Activated CD4-positive, alpha-beta T cell treated with anti-CD3 and anti-CD28 coated beads, Interleukin-2, amount 10 ng/mL, durations not matched to agents 7 days and 5 days (primary cell): ENCODE measurements at regions of chr5 and their contacts with region 1.

Region 1: DNA sequence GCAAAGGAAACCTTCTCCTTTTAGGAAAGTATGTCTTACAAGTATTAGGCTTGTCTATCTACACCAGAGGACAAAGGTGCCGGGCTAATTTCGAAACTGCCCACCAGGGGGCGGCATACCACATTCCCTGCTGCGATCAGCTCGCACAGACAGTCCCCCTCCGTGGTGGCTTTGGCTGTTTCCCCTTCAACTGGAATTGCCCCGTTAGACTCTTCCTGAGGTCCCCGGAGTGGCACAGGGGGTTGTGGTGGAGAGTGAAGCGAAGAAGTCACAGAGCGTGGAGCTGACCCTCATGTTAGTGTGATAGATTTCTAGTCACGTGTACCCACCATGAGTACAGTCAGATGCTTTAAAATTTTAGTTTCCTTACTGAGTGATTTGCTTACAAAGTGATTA is 17.5 kb downstream of the PTTG1 start:
- DNase-seq: peak; percentile 87
- H3K4me3 Mint-ChIP-seq: peak overlapping the region; percentile 73
- H3K27ac Mint-ChIP-seq: peak overlapping the region; percentile 74
- H3K4me1 Mint-ChIP-seq: peaks cover 36% of the 10 kb centered on the region
- H3K27me3 Mint-ChIP-seq: peaks cover 5% of the 10 kb centered on the region

Region 2: GRCh38 chr5:160353379-160353778 is 85.8 kb before region 1 on chr5:
- CTCF ChIA-PET with region 1: no interaction called
- POLR2A ChIA-PET with region 1: no interaction called
- DNase-seq: no peak
- H3K4me3 Mint-ChIP-seq: no peak overlapping the region
- H3K27ac Mint-ChIP-seq: no peak overlapping the region
- H3K4me1 Mint-ChIP-seq: no peaks in the 10 kb centered on the region
- H3K27me3 Mint-ChIP-seq: no peaks in the 10 kb centered on the region

Region 3: GRCh38 chr5:160421625-160422258 is 17.5 kb before region 1 on chr5 and contains the start of gene PTTG1:
- CTCF ChIA-PET with region 1: interaction called, 52 read pairs
- POLR2A ChIA-PET with region 1: no interaction called
- DNase-seq: peak; percentile 93
- H3K4me3 Mint-ChIP-seq: peak within 1 kb of the TSS; percentile 92
- H3K27ac Mint-ChIP-seq: peak within 1 kb of the TSS; percentile 94
- H3K4me1 Mint-ChIP-seq: peaks cover 72% of the 10 kb centered on the region
- H3K27me3 Mint-ChIP-seq: no peaks in the 10 kb centered on the region
- total RNA-seq, gene PTTG1: 160 to 189 TPM

Region 4: DNA sequence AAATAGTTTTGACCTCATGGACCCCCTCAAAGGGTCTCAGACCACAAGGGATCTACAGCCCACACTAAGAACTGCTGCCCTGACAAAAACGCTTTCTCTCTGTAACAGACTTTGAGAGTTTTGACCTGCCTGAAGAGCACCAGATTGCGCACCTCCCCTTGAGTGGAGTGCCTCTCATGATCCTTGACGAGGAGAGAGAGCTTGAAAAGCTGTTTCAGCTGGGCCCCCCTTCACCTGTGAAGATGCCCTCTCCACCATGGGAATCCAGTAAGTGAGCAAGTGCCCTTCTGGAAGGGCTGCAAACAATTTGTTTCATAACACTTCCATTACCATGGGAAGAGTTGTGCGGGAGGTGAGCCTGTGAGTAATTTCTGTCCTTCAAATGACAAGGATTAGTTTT is 11.6 kb before region 1 on chr5:
- CTCF ChIA-PET with region 1: interaction called, 52 read pairs
- POLR2A ChIA-PET with region 1: no interaction called
- DNase-seq: no peak
- H3K4me3 Mint-ChIP-seq: no peak overlapping the region
- H3K27ac Mint-ChIP-seq: no peak overlapping the region
- H3K4me1 Mint-ChIP-seq: peaks cover 31% of the 10 kb centered on the region
- H3K27me3 Mint-ChIP-seq: no peaks in the 10 kb centered on the region

Region 5: GRCh38 chr5:160458806-160459800 is 19.9 kb after region 1 on chr5:
- CTCF ChIA-PET with region 1: interaction called, 63 read pairs
- POLR2A ChIA-PET with region 1: no interaction called
- DNase-seq: no peak
- H3K4me3 Mint-ChIP-seq: no peak overlapping the region
- H3K27ac Mint-ChIP-seq: no peak overlapping the region
- H3K4me1 Mint-ChIP-seq: peaks cover 18% of the 10 kb centered on the region
- H3K27me3 Mint-ChIP-seq: peaks cover 2% of the 10 kb centered on the region

Region 6: GRCh38 chr5:160467555-160468362 is 28.6 kb after region 1 on chr5:
- CTCF ChIA-PET with region 1: interaction called, 63 read pairs
- POLR2A ChIA-PET with region 1: interaction called, 3 read pairs
- DNase-seq: peak; percentile 82
- H3K4me3 Mint-ChIP-seq: peak overlapping the region; percentile 97
- H3K27ac Mint-ChIP-seq: peak overlapping the region; percentile 96
- H3K4me1 Mint-ChIP-seq: peaks cover 83% of the 10 kb centered on the region
- H3K27me3 Mint-ChIP-seq: peaks cover 2% of the 10 kb centered on the region

Region 7: GRCh38 chr5:160477266-160477970 is 38.2 kb after region 1 on chr5:
- CTCF ChIA-PET with region 1: interaction called, 18 read pairs
- POLR2A ChIA-PET with region 1: no interaction called
- DNase-seq: no peak
- H3K4me3 Mint-ChIP-seq: no peak overlapping the region
- H3K27ac Mint-ChIP-seq: peak overlapping the region; percentile 79
- H3K4me1 Mint-ChIP-seq: peaks cover 65% of the 10 kb centered on the region
- H3K27me3 Mint-ChIP-seq: no peaks in the 10 kb centered on the region

Region 8: GRCh38 chr5:160508780-160509361 is 69.7 kb after region 1 on chr5:
- CTCF ChIA-PET with region 1: interaction called, 32 read pairs
- POLR2A ChIA-PET with region 1: interaction called, 5 read pairs
- DNase-seq: peak; percentile 83
- H3K4me3 Mint-ChIP-seq: no peak overlapping the region
- H3K27ac Mint-ChIP-seq: no peak overlapping the region
- H3K4me1 Mint-ChIP-seq: peaks cover 38% of the 10 kb centered on the region
- H3K27me3 Mint-ChIP-seq: peaks cover 6% of the 10 kb centered on the region

Region 9: DNA sequence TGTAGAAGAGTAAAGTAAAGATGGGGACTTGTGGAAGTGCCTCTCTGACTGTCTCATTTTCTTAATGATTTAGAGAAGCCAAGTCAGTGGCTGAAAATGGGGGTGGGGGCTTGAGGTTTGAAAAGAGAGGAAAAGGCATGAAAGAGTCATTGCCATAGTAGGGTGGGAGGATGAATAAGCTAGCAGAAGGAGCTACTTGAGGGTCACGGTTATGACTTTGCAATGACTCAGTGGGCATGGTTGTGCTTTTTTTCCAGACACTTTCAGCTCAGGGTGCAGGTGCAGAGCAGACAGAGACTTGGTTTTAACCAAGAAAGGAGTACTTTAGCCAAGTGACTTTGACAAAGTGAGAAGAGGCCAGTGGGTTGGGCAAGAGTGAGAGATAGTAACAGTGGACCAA is 100.2 kb after region 1 on chr5:
- CTCF ChIA-PET with region 1: no interaction called
- POLR2A ChIA-PET with region 1: no interaction called
- DNase-seq: no peak
- H3K4me3 Mint-ChIP-seq: no peak overlapping the region
- H3K27ac Mint-ChIP-seq: no peak overlapping the region
- H3K4me1 Mint-ChIP-seq: no peaks in the 10 kb centered on the region
- H3K27me3 Mint-ChIP-seq: no peaks in the 10 kb centered on the region